ENCODE measurements at regions of chr1 and their contacts with region 1.

Region 1: GRCh38 chr1:11707621-11708276 is 16.2 kb downstream of the DRAXIN start:
- DNase-seq: no peak
- H3K4me3 Mint-ChIP-seq: no peak overlapping the region
- H3K27ac Mint-ChIP-seq: no peak overlapping the region
- H3K4me1 Mint-ChIP-seq: peaks cover 5% of the 10 kb centered on the region
- H3K27me3 Mint-ChIP-seq: peaks cover 11% of the 10 kb centered on the region
- CTCF ChIP-seq: no peak

Region 2: GRCh38 chr1:11661103-11661502 is 46.6 kb before region 1 on chr1:
- CTCF ChIA-PET with region 1: interaction called, 10 read pairs
- POLR2A ChIA-PET with region 1: no interaction called
- intact Hi-C with region 1: no loop called
- DNase-seq: no peak
- H3K4me3 Mint-ChIP-seq: no peak overlapping the region
- H3K27ac Mint-ChIP-seq: no peak overlapping the region
- H3K4me1 Mint-ChIP-seq: no peaks in the 10 kb centered on the region
- H3K27me3 Mint-ChIP-seq: no peaks in the 10 kb centered on the region
- CTCF ChIP-seq: no peak

Measured in MCF 10A (cell line).